ENCODE measurements at regions of chr3 and their contacts with region 1.

Region 1: GRCh38 chr3:179322286-179323196 is at the start of gene ZNF639:
- DNase-seq: peak; percentile 95
- H3K4me3 Mint-ChIP-seq: peak within 1 kb of the TSS; percentile 89
- H3K27ac Mint-ChIP-seq: peak within 1 kb of the TSS; percentile 93
- H3K4me1 Mint-ChIP-seq: peaks cover 27% of the 10 kb centered on the region
- H3K27me3 Mint-ChIP-seq: peaks cover 5% of the 10 kb centered on the region
- total RNA-seq, gene ZNF639: 36.7 and 38.1 TPM in 2 replicates

Region 2: DNA sequence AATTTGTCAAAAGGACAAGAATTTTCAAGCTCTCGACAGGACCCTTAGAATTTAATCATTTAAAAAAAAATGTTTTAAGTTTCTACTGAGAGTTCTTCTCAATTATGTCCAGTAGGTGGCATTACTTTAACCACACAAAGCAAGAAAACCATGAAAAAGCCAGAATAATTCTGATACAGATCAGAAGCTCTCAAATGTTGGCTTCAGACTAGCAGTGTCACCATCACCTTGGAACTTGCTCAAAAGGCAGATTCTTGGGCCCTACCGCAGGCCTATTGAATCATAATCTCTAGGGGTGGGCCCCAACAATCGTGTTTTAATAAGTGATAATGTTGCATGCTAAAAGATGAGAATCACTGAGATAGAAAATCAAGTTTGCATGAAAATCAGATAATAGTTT is 885.8 kb before region 1 on chr3:
- intact Hi-C with region 1: loop called (anchors 5 kb)
- DNase-seq: no peak
- H3K4me3 Mint-ChIP-seq: no peak overlapping the region
- H3K27ac Mint-ChIP-seq: no peak overlapping the region
- H3K4me1 Mint-ChIP-seq: no peaks in the 10 kb centered on the region
- H3K27me3 Mint-ChIP-seq: no peaks in the 10 kb centered on the region

Region 3: GRCh38 chr3:179071550-179072397 is 250.8 kb before region 1 on chr3 and contains the start of gene ZMAT3:
- intact Hi-C with region 1: loop called (anchors 1 kb)
- DNase-seq: peak; percentile 96
- H3K4me3 Mint-ChIP-seq: peak within 1 kb of the TSS; percentile 99
- H3K27ac Mint-ChIP-seq: peak within 1 kb of the TSS; percentile 96
- H3K4me1 Mint-ChIP-seq: peaks cover 35% of the 10 kb centered on the region
- H3K27me3 Mint-ChIP-seq: no peaks in the 10 kb centered on the region
- total RNA-seq, gene ZMAT3: 11.8 and 13.1 TPM in 2 replicates

Region 4: DNA sequence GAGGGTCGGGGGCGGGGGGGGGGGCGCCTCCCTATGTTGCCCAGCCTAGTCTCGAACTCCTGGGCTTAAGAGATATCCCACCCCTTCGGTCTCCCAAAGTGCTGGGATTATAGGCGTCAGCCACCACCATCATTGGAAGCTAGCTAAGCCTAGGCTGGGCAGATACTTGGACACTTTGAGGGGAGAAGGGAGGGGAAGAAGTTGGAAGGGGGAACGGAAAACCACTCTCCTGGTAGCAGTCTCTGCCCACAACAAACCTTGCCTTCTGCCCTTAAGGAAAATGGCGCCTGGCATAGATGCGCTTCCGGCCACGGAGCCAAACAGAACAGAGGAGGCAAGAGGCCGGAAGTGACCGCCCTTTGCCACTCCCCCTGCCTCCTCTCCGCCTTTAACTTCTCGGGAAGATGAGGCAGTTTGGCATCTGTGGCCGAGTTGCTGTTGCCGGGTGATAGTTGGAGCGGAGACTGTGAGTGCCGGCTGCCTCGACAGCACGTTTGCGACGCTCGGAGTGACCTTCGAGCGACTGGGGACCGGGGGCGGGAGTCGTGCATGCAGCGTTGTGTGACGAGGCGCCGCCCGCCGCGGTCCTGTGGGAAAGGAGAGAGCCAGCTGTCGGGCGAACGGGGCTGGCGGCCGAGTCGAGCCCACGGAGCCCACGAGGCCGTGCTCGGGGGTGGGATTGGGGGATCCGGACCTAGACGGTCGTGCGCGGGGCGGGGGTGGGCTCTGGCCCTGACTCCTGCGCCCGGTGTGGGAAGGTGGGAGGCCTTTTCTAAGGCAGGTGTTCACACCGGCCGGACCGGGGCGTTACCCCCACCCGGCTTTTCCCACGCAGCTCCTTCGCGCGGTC is 25.0 kb after region 1 on chr3 and contains the start of gene MFN1:
- intact Hi-C with region 1: loop called (anchors 1 kb)
- DNase-seq: peak; percentile 97
- H3K4me3 Mint-ChIP-seq: peak within 1 kb of the TSS; percentile 100
- H3K27ac Mint-ChIP-seq: peak within 1 kb of the TSS; percentile 98
- H3K4me1 Mint-ChIP-seq: peaks cover 14% of the 10 kb centered on the region
- H3K27me3 Mint-ChIP-seq: no peaks in the 10 kb centered on the region
- total RNA-seq, gene MFN1: 36.2 and 37.0 TPM in 2 replicates

Region 5: GRCh38 chr3:179451265-179452175 is 129.0 kb after region 1 on chr3 and contains the start of gene GNB4:
- intact Hi-C with region 1: loop called (anchors 2 kb)
- DNase-seq: peak; percentile 90
- H3K4me3 Mint-ChIP-seq: peak within 1 kb of the TSS; percentile 85
- H3K27ac Mint-ChIP-seq: peak within 1 kb of the TSS; percentile 87
- H3K4me1 Mint-ChIP-seq: peaks cover 30% of the 10 kb centered on the region
- H3K27me3 Mint-ChIP-seq: peaks cover 68% of the 10 kb centered on the region
- total RNA-seq, gene GNB4: 11.8 and 14.0 TPM in 2 replicates